Heart left ventricle (tissue), 16 donors: ENCODE measurements at regions of chr5 and their contacts with region 1.

Region 1: DNA sequence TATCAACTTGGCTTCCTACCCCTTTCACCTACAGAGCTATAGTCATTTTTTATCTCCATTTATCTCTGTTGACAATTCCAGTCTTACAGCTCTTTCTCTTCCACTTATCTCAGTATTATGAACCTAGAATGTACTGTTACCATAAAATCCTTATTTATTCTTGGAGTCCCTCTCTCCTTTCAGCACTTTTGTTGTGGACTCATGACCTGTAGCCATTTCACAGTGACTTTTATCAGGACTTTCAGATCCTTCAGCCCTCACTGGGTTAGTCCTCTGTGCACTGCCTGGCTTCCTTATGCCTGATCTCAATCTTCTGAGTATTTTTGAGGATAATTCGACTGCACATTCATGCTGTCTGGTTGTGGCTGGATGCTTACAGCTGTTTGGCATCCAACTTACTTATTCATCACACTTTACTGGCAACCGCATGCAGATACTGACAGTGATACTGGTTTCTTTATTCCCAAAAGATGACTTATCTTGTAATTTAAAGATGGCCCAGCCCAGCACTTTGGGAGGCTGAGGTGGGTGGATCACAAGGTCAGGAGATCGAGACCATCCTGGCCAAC is 293.3 kb downstream of the MAN2A1 start:
- DNase-seq: no peak
- ATAC-seq: no peak
- H3K4me3 ChIP-seq: no peak overlapping the region
- H3K27ac ChIP-seq: no peak overlapping the region
- H3K4me1 ChIP-seq: peaks cover 0 to 15% (median 3%) of the 10 kb centered on the region in 12 donors
- H3K27me3 ChIP-seq: no peaks in the 10 kb centered on the region
- CTCF ChIP-seq: no peak
- POLR2A ChIP-seq: no peak

Region 2: DNA sequence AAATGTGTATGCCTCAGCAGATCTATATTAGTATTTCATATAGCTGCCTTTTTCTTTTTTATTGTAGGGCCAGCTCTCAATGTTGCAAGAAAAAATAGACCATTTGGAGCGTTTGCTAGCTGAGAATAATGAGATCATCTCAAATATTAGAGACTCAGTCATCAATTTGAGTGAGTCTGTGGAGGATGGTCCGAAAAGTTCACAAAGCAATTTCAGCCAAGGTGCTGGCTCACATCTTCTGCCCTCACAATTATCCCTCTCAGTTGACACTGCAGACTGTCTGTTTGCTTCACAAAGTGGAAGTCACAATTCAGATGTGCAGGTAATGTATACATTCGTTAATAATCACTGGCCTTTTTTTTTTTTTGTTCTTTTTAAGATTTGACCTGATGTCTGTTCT is 269.6 kb before region 1 on chr5:
- intact Hi-C with region 1: no loop called
- DNase-seq: no peak
- ATAC-seq: no peak
- H3K4me3 ChIP-seq: no peak overlapping the region
- H3K27ac ChIP-seq: no peak overlapping the region
- H3K4me1 ChIP-seq: peaks cover 0 to 18% (median 0%) of the 10 kb centered on the region in 12 donors
- H3K27me3 ChIP-seq: no peaks in the 10 kb centered on the region
- CTCF ChIP-seq: no peak
- POLR2A ChIP-seq: no peak

Region 3: GRCh38 chr5:109805883-109806282 is 177.2 kb before region 1 on chr5:
- intact Hi-C with region 1: no loop called
- DNase-seq: no peak
- ATAC-seq: no peak
- H3K4me3 ChIP-seq: no peak overlapping the region
- H3K27ac ChIP-seq: no peak overlapping the region
- H3K4me1 ChIP-seq: peaks cover 0 to 6% (median 0%) of the 10 kb centered on the region in 12 donors
- H3K27me3 ChIP-seq: no peaks in the 10 kb centered on the region
- CTCF ChIP-seq: no peak
- POLR2A ChIP-seq: no peak

Region 4: GRCh38 chr5:109911731-109912130 is 71.3 kb before region 1 on chr5:
- intact Hi-C with region 1: no loop called
- DNase-seq: no peak
- ATAC-seq: peak in 3 of 4 donors; percentile 32 to 39 (median 33)
- H3K4me3 ChIP-seq: no peak overlapping the region
- H3K27ac ChIP-seq: peak overlapping the region in 1 of 12 donors; percentile 6
- H3K4me1 ChIP-seq: no peaks in the 10 kb centered on the region
- H3K27me3 ChIP-seq: no peaks in the 10 kb centered on the region
- CTCF ChIP-seq: no peak
- POLR2A ChIP-seq: no peak

Region 5: DNA sequence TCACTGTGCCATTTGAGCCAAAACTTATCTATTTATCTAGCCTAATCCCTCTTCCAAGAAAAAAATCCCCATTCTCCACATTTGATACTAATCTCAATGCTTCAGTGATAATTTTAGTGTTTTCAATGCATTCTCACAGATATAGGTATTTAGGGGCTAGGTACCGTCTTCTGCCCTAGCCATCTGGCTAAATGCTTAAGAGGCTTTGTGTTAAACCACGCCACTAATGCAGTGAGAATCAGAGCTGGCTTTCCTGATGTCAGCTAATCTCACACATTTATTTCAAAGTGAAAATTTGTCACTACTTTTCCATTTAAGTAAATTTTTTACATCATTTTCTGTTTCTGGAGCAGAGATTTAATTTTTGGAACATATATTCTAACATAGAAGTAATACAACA is 186.4 kb after region 1 on chr5:
- intact Hi-C with region 1: loop called in 1 of 10 experiments (anchors 5 kb)
- DNase-seq: no peak
- ATAC-seq: no peak
- H3K4me3 ChIP-seq: no peak overlapping the region
- H3K27ac ChIP-seq: no peak overlapping the region
- H3K4me1 ChIP-seq: no peaks in the 10 kb centered on the region
- H3K27me3 ChIP-seq: no peaks in the 10 kb centered on the region
- CTCF ChIP-seq: no peak
- POLR2A ChIP-seq: no peak